ENCODE measurements at regions of chr6 and their contacts with region 1.

Region 1: GRCh38 chr6:84428300-84428907 is 201.0 kb upstream of the CEP162 start:
- DNase-seq: peak; percentile 78
- H3K4me3 ChIP-seq: no peak overlapping the region
- CTCF ChIP-seq: peak; percentile 95

Region 2: DNA sequence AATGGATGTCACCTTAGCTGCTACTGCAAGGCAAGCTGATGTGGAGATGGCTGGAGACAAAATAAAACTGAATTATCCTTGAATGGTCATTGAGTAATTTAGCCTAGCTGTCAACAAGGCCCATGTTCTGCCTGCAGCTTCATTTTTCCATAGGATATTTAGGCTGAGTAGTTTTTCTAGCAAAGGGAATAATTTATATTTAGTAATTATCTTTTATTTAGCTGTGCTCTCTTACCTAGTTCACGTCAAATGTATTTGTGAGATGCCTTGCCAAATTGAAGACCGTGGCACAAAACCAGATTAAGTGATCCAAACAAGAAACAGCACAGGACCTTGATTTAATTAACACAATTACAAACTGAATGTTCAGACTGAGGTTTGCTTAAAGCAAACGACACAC is 123.5 kb before region 1 on chr6:
- in situ Hi-C with region 1: no loop called
- DNase-seq: no peak
- H3K4me3 ChIP-seq: no peak overlapping the region
- CTCF ChIP-seq: no peak

Region 3: GRCh38 chr6:84764332-84765049 is 336.1 kb after region 1 on chr6 and contains the start of gene TBX18:
- in situ Hi-C with region 1: loop called (anchors 10 kb)
- DNase-seq: peak; percentile 99
- H3K4me3 ChIP-seq: peak within 1 kb of the TSS; percentile 70
- CTCF ChIP-seq: peak; percentile 25